Activated T-helper 1 cell treated with anti-CD3 and anti-CD28 coated beads, Interleukin-12 subunit alpha, Interleukin-12 subunit beta, Interleukin-2, Interleukin-4 antibody, amounts not matched to agents 30 ng/mL and 10 ng/mL and 1 ng/mL, durations not matched to agents 14 hours and 24 hours and 36 hours (primary cell): ENCODE measurements at regions of chr15 and their contacts with region 1.

Region 1: GRCh38 chr15:90886041-90886614 is 1.8 kb downstream of the FES start:
- DNase-seq: peak; percentile 66
- H3K4me3 Mint-ChIP-seq: peak overlapping the region; percentile 51
- H3K27ac Mint-ChIP-seq: peak overlapping the region; percentile 87
- H3K4me1 Mint-ChIP-seq: peaks cover 50% of the 10 kb centered on the region
- H3K27me3 Mint-ChIP-seq: no peaks in the 10 kb centered on the region

Region 2: DNA sequence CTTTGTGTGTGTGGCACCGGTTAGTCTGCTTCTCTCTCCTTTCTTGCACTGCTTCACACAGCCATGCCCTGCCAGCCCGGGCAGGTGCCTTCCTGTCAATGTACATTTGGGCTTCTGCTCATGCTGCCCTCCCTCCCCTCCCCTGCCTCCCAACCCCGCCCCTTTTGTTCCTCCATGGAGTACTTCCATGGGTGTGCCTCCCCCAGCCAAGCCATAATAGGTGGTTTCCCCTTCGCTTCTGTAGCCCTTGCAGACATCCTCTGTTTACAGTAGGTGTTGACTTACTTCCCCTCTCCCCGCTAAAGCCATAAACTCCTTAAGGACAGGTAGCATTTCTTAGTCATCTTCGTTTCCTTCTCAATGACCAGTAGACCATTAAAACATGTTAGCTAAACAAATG is 388.2 kb before region 1 on chr15:
- intact Hi-C with region 1: loop called (anchors 10 kb)
- DNase-seq: no peak
- H3K4me3 Mint-ChIP-seq: no peak overlapping the region
- H3K27ac Mint-ChIP-seq: peak overlapping the region; percentile 14
- H3K4me1 Mint-ChIP-seq: peaks cover 17% of the 10 kb centered on the region
- H3K27me3 Mint-ChIP-seq: no peaks in the 10 kb centered on the region

Region 3: DNA sequence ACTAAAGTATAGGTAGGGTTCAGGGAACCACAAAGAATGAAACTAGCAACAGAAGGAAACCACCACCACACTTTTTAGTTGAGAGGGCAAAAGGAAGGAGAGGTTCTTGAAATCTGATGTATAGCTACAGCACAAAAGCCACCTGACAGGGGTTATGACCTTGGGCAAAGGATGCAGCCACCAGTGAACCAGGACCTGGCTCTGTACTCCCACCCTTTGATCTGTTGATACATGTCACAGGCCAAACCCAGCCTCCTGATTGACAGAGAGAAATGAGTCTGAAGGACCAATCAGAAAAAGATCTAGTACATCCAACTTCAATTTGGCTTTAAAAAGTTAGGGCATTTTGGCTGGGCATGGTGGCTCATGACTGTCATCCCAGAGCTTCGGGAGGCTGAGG is 188.9 kb before region 1 on chr15:
- intact Hi-C with region 1: loop called (anchors 5 kb)
- DNase-seq: peak; percentile 40
- H3K4me3 Mint-ChIP-seq: no peak overlapping the region
- H3K27ac Mint-ChIP-seq: peak overlapping the region; percentile 85
- H3K4me1 Mint-ChIP-seq: peaks cover 42% of the 10 kb centered on the region
- H3K27me3 Mint-ChIP-seq: no peaks in the 10 kb centered on the region